HepG2 (cell line): ENCODE measurements at regions of chr20 and their contacts with region 1.

Region 1: DNA sequence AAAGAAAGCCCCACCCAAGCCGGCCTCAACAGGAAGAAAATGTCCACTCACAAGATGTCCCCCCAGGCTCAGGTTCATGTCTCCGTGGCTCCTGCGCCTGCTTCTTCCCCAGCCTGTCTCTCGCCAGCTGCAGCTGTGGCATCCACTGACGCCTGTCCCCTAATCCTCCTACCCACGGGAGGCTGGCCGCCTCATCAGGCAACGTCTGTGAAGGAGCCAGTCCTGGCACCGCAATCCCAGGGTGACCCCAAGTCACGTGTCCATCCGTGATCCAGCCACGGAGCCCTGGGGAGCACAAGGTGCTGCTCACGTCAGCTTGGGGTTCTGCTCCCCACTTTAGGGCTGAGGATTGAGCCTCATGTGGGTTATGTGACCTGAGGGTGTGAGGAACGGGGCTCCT is 640.3 kb downstream of the CDH26 start:
- DNase-seq: no peak
- ATAC-seq: no peak
- H3K4me3 ChIP-seq: no peak overlapping the region
- H3K27ac ChIP-seq: no peak overlapping the region
- H3K4me1 ChIP-seq: no peaks in the 10 kb centered on the region
- H3K27me3 ChIP-seq: no peaks in the 10 kb centered on the region
- CTCF ChIP-seq: no peak
- EP300 ChIP-seq: no peak
- POLR2A ChIP-seq: no peak
- RAD21 ChIP-seq: no peak

Region 2: DNA sequence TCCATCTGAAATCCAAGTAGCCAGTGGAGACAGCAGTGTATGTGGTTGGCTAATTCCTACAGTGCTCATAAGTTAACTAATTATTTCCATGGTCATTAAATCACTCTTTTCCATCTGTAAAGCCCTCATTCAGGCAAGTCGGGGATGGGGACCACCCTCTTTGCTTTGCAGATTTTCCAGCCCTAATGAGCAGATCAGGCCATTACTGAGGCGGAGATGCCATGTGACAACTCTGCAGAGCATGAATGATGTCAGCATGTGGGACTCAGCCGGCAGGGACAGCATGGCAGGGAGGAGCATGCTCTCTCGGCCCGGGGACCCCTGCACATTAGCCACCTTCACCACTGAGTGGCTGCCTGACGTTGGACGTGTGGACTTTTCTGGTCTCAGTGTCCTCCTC is 30.2 kb after region 1 on chr20:
- CTCF ChIA-PET with region 1: no interaction called
- POLR2A ChIA-PET with region 1: no interaction called
- in situ Hi-C with region 1: no loop called
- intact Hi-C with region 1: loop called (anchors 1 kb)
- DNase-seq: no peak
- ATAC-seq: no peak
- H3K4me3 ChIP-seq: no peak overlapping the region
- H3K27ac ChIP-seq: no peak overlapping the region
- H3K4me1 ChIP-seq: no peaks in the 10 kb centered on the region
- H3K27me3 ChIP-seq: no peaks in the 10 kb centered on the region
- CTCF ChIP-seq: no peak
- EP300 ChIP-seq: no peak
- POLR2A ChIP-seq: no peak
- RAD21 ChIP-seq: no peak